Spleen (tissue), 13 donors: ENCODE measurements at regions of chr7 and their contacts with region 1.

Region 1: DNA sequence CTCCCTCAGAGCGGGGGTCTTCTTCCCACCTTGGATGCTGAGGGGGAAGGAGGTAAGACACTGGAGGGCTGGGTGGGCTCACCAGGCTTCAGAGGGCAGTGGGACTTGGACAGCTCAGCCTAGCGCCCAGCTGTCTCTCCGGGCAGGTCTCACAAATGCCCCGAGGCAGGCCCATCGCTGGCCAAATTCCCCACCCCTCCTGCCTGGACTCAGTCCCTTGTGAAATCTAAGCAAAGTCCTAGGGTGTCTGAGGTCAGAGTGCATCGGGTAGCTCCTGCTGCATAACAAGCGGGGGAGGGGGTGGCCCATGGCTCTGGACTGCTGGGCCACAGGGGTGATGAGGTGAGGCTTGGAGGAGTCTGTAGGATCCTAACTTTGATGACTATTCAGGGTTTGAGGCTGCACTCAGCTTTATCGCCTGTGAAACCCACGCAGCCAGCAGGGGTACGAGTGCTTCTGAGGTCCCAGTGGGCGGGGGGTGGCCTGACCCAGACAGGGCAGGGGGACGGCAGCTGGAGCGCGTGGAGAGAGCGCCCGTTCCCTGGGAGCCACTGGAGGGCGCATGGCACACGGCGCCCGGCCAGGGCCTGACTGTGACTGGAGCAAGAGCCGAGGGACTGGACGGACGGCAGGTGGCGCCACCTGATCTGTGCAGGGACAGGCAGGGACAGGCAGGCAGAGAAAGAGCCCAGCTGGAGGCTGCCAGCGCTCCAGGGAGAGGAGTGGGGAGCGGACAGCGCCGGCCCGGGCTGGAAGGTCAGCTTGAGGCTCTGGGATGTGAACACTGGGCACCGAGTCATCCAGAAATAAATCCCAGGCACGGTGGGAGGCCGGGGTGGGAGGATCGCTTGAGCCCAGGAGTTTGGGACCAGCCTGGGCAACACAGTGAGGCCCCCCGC is 10.0 kb downstream of the CYP2W1 start:
- DNase-seq: peak; percentile 100
- H3K4me3 ChIP-seq: no peak overlapping the region
- H3K27ac ChIP-seq: no peak overlapping the region
- H3K4me1 ChIP-seq: peaks cover 0 to 43% (median 20%) of the 10 kb centered on the region in 6 donors
- H3K27me3 ChIP-seq: peaks cover 0 to 25% (median 6%) of the 10 kb centered on the region in 7 donors
- CTCF ChIP-seq: peak; percentile 99 to 100 (median 100)
- POLR2A ChIP-seq: no peak

Region 2: GRCh38 chr7:1065263-1066260 is 72.6 kb after region 1 on chr7:
- intact Hi-C with region 1: loop called (anchors 2 kb)
- DNase-seq: peak; percentile 93
- H3K4me3 ChIP-seq: peak overlapping the region in 4 of 8 donors; percentile 26 to 59 (median 28)
- H3K27ac ChIP-seq: no peak overlapping the region
- H3K4me1 ChIP-seq: peaks cover 12 to 48% (median 35%) of the 10 kb centered on the region in 6 donors
- H3K27me3 ChIP-seq: peaks cover 0 to 37% (median 0%) of the 10 kb centered on the region in 7 donors
- CTCF ChIP-seq: peak; percentile 80 to 96 (median 95)
- POLR2A ChIP-seq: no peak

Region 3: GRCh38 chr7:1175967-1176851 is 183.3 kb after region 1 on chr7:
- intact Hi-C with region 1: loop called (anchors 10 kb)
- DNase-seq: peak; percentile 93
- H3K4me3 ChIP-seq: peak overlapping the region in 3 of 8 donors; percentile 12 to 62 (median 13)
- H3K27ac ChIP-seq: peak overlapping the region in 3 of 8 donors; percentile 8 to 39 (median 22)
- H3K4me1 ChIP-seq: peaks cover 8 to 18% (median 13%) of the 10 kb centered on the region in 6 donors
- H3K27me3 ChIP-seq: peaks cover 0 to 30% (median 0%) of the 10 kb centered on the region in 7 donors
- CTCF ChIP-seq: peak; percentile 81 to 97 (median 90)
- POLR2A ChIP-seq: peak in 1 of 3 donors; percentile 23

Region 4: DNA sequence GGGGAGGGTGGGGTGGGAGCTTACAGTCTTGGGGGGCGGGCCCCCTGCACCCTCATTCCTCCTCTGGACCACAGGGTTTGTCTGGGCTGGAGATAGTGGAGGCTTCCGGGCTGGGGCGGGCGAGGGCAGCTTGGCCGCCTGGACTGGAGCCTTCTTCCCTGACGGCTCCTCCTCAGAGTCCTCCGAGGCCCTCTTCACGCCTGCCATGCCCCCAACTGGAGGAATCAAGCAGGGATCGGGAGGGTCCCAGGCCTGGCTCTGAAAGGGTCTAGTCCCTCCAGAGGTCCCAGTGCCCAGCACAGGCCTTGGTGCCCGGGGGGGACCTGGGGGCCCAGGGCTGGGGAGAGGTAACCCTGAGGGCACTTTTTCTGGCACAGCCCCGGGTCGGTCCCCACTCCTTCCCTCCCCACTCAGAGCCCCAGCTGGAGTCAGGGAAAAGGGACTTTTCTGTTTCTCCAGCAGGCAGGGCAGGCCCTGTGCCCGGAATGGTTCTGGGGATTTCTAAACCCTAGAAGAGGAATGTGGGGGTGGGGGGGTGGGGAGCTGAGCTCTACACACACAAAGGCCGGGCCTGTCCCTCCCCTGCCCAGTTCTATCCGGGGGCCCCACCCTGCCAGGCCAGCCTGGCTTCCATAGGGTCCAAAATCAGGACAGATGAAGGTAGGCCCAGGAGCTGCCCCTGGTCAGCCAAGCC is 454.7 kb after region 1 on chr7:
- intact Hi-C with region 1: no loop called
- DNase-seq: no peak
- H3K4me3 ChIP-seq: no peak overlapping the region
- H3K27ac ChIP-seq: peak overlapping the region in 7 of 8 donors; percentile 58 to 84 (median 68)
- H3K4me1 ChIP-seq: peaks cover 0 to 78% (median 30%) of the 10 kb centered on the region in 6 donors
- H3K27me3 ChIP-seq: no peaks in the 10 kb centered on the region
- CTCF ChIP-seq: no peak
- POLR2A ChIP-seq: no peak